A549 (cell line): ENCODE measurements at regions of chr22 and their contacts with region 1.

Region 1: GRCh38 chr22:31080848-31081649 is at the start of gene SMTN:
- DNase-seq: peak; percentile 80 to 82
- ATAC-seq: peak; percentile 80 to 86
- H3K4me3 ChIP-seq: peak within 1 kb of the TSS; percentile 95
- H3K27ac ChIP-seq: peak within 1 kb of the TSS; percentile 92 to 94
- H3K4me1 ChIP-seq: peaks cover 26% of the 10 kb centered on the region
- CTCF ChIP-seq: no peak
- EP300 ChIP-seq: no peak
- POLR2A ChIP-seq: peak; percentile 73; the same call in 1 of the 2 replicates
- RAD21 ChIP-seq: 0 out of 5 replicates have a peak, but pooled peaks of 1 of the 2 experiments have one; percentile 10
- polyA plus RNA-seq, gene SMTN: 7.0 and 12.7 TPM in 2 replicates

Region 2: DNA sequence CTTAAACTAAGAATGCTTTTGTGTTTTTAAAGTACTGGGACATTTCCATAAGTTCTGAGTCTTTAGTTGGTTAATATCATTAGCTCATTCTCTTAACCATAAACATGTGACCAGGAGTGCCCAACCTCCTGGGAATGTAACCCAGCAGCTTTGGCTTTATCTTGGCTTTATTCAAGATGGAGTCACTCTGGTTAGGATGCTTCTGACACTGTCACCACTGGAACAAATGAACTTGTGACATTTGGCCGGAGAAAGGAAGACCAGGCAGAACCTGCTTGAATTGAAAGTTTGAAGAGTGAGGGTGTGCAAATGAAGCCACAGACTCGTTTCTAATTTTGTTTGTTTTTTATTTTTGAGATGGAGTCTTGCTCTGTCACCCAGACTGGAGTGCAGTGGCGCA is 331.8 kb before region 1 on chr22:
- CTCF ChIA-PET with region 1: no interaction called
- POLR2A ChIA-PET with region 1: no interaction called
- DNase-seq: no peak
- ATAC-seq: no peak
- H3K4me3 ChIP-seq: no peak overlapping the region
- H3K27ac ChIP-seq: no peak overlapping the region
- H3K4me1 ChIP-seq: no peaks in the 10 kb centered on the region
- CTCF ChIP-seq: no peak
- EP300 ChIP-seq: no peak
- POLR2A ChIP-seq: no peak
- RAD21 ChIP-seq: no peak

Region 3: GRCh38 chr22:30947816-30948454 is 133.1 kb before region 1 on chr22:
- CTCF ChIA-PET with region 1: interaction called, 32 read pairs
- POLR2A ChIA-PET with region 1: interaction called, 5 read pairs
- DNase-seq: peak in 1 of 2 experiments; percentile 46
- ATAC-seq: peak; percentile 50 to 53; a peak in 2 of 6 replicates
- H3K4me3 ChIP-seq: no peak overlapping the region
- H3K27ac ChIP-seq: no peak overlapping the region
- H3K4me1 ChIP-seq: no peaks in the 10 kb centered on the region
- CTCF ChIP-seq: peak; percentile 59
- EP300 ChIP-seq: no peak
- POLR2A ChIP-seq: no peak
- RAD21 ChIP-seq: peak; percentile 57 to 67; a peak in 4 of 5 replicates

Region 4: DNA sequence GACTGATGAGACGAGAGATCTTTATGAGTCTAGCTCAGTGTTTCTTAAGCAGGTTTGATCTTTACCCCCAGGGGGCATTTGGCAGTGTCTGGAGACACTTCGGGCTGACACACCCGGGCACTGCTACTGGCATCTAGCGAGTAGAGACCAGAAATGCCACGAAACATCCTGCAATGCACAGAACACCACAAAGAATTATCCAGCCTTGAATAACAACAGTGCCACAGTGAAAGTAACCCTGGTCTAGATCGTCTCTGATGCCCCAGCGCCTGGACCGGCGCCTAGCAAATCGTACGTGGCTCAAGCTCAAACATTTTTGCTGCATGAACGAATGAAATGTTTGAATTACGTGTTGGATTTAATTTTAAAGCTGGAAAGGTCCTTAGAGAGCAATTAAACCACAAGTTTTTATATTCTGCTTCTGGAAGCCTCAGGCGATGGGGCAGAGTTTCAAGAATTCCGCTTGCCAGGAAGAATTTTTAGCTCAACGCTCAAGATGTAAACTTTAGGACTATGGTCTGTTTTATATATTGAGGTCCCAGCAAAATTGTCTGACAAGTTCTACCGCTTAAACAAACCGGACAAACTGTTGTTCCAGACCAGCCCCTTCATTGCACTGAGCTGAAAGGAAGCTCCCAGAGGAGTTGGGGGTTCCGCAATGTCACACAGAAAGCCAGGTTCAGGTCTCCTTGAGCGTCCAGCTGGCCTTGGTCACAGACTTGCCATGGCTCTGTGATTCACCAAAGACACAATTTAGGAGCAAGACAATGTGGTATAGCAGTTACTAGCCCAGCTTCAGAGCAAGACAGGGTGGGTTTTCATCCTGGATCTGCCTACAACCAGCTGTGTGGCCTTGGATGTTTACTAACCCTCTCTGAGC is 44.1 kb before region 1 on chr22:
- CTCF ChIA-PET with region 1: interaction called, 12 read pairs
- POLR2A ChIA-PET with region 1: no interaction called
- DNase-seq: peak in 1 of 2 experiments; percentile 60
- ATAC-seq: peak; percentile 82 to 85
- H3K4me3 ChIP-seq: no peak overlapping the region
- H3K27ac ChIP-seq: peak overlapping the region; percentile 17 to 36; a peak in 2 of 6 replicates
- H3K4me1 ChIP-seq: peaks cover 11% of the 10 kb centered on the region; the same call in 1 of the 3 replicates
- CTCF ChIP-seq: 0 out of 3 replicates have a peak, but pooled peaks have one; percentile 9
- EP300 ChIP-seq: no peak
- POLR2A ChIP-seq: no peak
- RAD21 ChIP-seq: peak; percentile 27 to 29; a peak in 2 of 5 replicates

Region 5: GRCh38 chr22:31098632-31099110 is 17.6 kb after region 1 on chr22:
- CTCF ChIA-PET with region 1: interaction called, 14 read pairs
- POLR2A ChIA-PET with region 1: interaction called, 4 read pairs
- DNase-seq: no peak
- ATAC-seq: no peak
- H3K4me3 ChIP-seq: no peak overlapping the region
- H3K27ac ChIP-seq: no peak overlapping the region
- H3K4me1 ChIP-seq: peaks cover 14% of the 10 kb centered on the region
- CTCF ChIP-seq: no peak
- EP300 ChIP-seq: no peak
- POLR2A ChIP-seq: no peak
- RAD21 ChIP-seq: no peak